CD4-positive, alpha-beta memory T cell (primary cell): ENCODE measurements at regions of chr17 and their contacts with region 1.

Region 1: DNA sequence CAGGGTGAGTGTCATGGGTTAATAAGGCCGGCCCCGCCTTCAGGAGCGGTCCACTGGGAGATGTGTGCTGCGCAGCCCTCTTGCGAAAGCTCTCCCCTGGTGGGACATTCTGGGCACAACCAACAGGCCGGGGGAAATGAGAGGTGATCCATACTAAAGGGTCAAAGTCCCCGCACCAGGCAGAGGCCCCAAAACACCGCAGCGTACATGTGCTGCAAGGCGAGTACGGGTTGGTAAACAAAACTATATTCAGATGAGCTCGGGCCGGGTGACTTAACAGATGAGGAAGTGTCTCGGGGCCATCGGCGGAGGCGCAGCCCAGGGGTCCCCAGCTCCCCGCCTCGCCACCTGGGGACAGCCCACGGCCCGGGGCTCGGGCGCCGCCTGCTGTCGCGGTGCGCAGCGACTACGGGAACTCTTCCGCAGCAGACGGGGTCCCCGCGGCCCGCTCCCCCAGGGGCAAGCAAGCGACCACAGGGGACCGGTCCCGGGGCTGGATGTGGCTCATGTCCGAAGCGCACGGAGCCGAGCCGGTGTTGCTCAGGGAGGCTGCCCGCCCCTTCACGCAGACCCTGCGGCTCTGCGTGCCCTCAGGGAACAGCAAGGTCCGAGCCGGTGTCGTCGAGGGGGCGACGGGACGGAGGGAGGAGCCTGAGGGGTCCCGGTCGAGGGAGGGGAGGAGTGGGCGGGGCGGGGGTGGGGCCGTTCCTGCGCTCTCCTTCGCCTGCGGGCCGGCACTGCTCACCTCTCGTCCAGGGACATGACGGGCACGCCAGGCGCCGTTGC is at the start of gene RAB37:
- DNase-seq: peak in 4 of 5 donors; percentile 37 to 64 (median 44)
- H3K4me3 ChIP-seq: peak within 1 kb of the TSS; percentile 79 to 100
- H3K4me3 Mint-ChIP-seq: peak within 1 kb of the TSS; percentile 91 to 96 (median 94)
- H3K27ac ChIP-seq: peak within 1 kb of the TSS; percentile 64
- H3K27ac Mint-ChIP-seq: peak within 1 kb of the TSS in 6 of 7 donors; percentile 85 to 93 (median 87)
- H3K4me1 ChIP-seq: peaks cover 53% of the 10 kb centered on the region
- H3K4me1 Mint-ChIP-seq: peaks cover 31 to 60% (median 40%) of the 10 kb centered on the region in 4 donors
- H3K27me3 ChIP-seq: no peaks in the 10 kb centered on the region
- H3K27me3 Mint-ChIP-seq: no peaks in the 10 kb centered on the region
- total RNA-seq, gene RAB37: 23.2 to 25.9 TPM

Region 2: GRCh38 chr17:74545843-74546230 is 190.9 kb before region 1 on chr17 and contains the start of gene CD300C:
- CTCF ChIA-PET with region 1: no interaction called
- POLR2A ChIA-PET with region 1: no interaction called
- intact Hi-C with region 1: no loop called
- DNase-seq: no peak
- H3K4me3 ChIP-seq: no peak within 1 kb of the TSS
- H3K4me3 Mint-ChIP-seq: no peak within 1 kb of the TSS
- H3K27ac ChIP-seq: no peak within 1 kb of the TSS
- H3K27ac Mint-ChIP-seq: peak within 1 kb of the TSS in 2 of 7 donors; percentile 51 to 64
- H3K4me1 ChIP-seq: no peaks in the 10 kb centered on the region
- H3K4me1 Mint-ChIP-seq: peaks cover 0 to 8% (median 4%) of the 10 kb centered on the region in 4 donors
- H3K27me3 ChIP-seq: no peaks in the 10 kb centered on the region
- H3K27me3 Mint-ChIP-seq: peaks cover 2 to 3% of the 10 kb centered on the region in 2 donors
- total RNA-seq, gene CD300C: not detected

Region 3: GRCh38 chr17:74671031-74671771 is 65.5 kb before region 1 on chr17:
- CTCF ChIA-PET with region 1: interaction called, 36 read pairs
- POLR2A ChIA-PET with region 1: interaction called, 8 read pairs
- intact Hi-C with region 1: loop called (anchors 5 kb)
- DNase-seq: peak; percentile 64 to 73 (median 68)
- H3K4me3 ChIP-seq: no peak overlapping the region
- H3K4me3 Mint-ChIP-seq: no peak overlapping the region
- H3K27ac ChIP-seq: no peak overlapping the region
- H3K27ac Mint-ChIP-seq: peak overlapping the region in 3 of 7 donors; percentile 41 to 73 (median 62)
- H3K4me1 ChIP-seq: no peaks in the 10 kb centered on the region
- H3K4me1 Mint-ChIP-seq: peaks cover 0 to 17% (median 2%) of the 10 kb centered on the region in 4 donors
- H3K27me3 ChIP-seq: peaks cover 7% of the 10 kb centered on the region
- H3K27me3 Mint-ChIP-seq: peaks cover 32 to 38% of the 10 kb centered on the region in 2 donors

Region 4: DNA sequence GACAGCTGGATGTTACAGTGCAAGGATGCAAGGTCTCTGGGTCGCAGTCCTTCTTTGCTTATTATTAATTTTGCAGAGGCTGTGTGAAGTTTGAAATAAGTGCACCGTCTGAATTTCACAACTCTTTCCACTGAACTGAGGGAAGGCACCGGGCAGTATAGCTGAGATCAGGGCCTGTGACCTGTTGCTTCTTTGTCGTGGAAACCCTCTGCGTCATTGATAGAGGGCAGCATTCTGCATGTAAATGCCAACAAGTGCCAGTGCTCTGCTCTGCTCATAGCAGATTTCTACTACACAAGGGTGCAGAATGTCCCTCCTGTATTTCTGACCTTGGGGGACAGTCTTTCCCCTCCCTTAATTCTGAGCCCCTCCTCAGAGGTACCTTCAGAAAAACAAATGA is 49.9 kb before region 1 on chr17:
- CTCF ChIA-PET with region 1: interaction called, 39 read pairs
- POLR2A ChIA-PET with region 1: interaction called, 4 read pairs
- intact Hi-C with region 1: no loop called
- DNase-seq: no peak
- H3K4me3 ChIP-seq: no peak overlapping the region
- H3K4me3 Mint-ChIP-seq: no peak overlapping the region
- H3K27ac ChIP-seq: no peak overlapping the region
- H3K27ac Mint-ChIP-seq: no peak overlapping the region
- H3K4me1 ChIP-seq: no peaks in the 10 kb centered on the region
- H3K4me1 Mint-ChIP-seq: peaks cover 0 to 3% (median 0%) of the 10 kb centered on the region in 4 donors
- H3K27me3 ChIP-seq: peaks cover 6% of the 10 kb centered on the region
- H3K27me3 Mint-ChIP-seq: peaks cover 2 to 11% of the 10 kb centered on the region in 2 donors

Region 5: DNA sequence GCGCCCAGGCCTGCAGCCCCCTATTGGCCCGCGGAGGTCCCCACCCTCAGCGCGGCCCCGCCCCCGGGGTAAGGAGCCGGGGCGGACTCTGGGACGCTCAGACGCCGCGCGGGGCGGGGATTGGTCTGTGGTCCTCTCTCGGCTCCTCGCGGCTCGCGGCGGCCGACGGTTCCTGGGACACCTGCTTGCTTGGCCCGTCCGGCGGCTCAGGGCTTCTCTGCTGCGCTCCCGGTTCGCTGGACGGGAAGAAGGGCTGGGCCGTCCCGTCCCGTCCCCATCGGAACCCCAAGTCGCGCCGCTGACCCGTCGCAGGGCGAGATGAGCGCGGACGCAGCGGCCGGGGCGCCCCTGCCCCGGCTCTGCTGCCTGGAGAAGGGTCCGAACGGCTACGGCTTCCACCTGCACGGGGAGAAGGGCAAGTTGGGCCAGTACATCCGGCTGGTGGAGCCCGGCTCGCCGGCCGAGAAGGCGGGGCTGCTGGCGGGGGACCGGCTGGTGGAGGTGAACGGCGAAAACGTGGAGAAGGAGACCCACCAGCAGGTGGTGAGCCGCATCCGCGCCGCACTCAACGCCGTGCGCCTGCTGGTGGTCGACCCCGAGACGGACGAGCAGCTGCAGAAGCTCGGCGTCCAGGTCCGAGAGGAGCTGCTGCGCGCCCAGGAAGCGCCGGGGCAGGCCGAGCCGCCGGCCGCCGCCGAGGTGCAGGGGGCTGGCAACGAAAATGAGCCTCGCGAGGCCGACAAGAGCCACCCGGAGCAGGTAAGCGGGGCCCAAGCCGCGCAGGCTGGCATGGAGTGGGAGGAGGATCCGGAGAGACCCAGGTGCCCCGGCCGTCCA is 12.0 kb after region 1 on chr17 and contains the start of gene NHERF1:
- CTCF ChIA-PET with region 1: interaction called, 74 read pairs
- POLR2A ChIA-PET with region 1: interaction called, 166 read pairs
- intact Hi-C with region 1: no loop called
- DNase-seq: peak; percentile 61 to 96 (median 94)
- H3K4me3 ChIP-seq: peak within 1 kb of the TSS; percentile 64 to 92
- H3K4me3 Mint-ChIP-seq: peak within 1 kb of the TSS; percentile 90 to 99 (median 98)
- H3K27ac ChIP-seq: peak within 1 kb of the TSS; percentile 80
- H3K27ac Mint-ChIP-seq: peak within 1 kb of the TSS; percentile 88 to 98 (median 94)
- H3K4me1 ChIP-seq: peaks cover 73% of the 10 kb centered on the region
- H3K4me1 Mint-ChIP-seq: peaks cover 43 to 81% (median 60%) of the 10 kb centered on the region in 4 donors
- H3K27me3 ChIP-seq: no peaks in the 10 kb centered on the region
- H3K27me3 Mint-ChIP-seq: no peaks in the 10 kb centered on the region
- total RNA-seq, gene NHERF1: 202 to 209 TPM

Region 6: DNA sequence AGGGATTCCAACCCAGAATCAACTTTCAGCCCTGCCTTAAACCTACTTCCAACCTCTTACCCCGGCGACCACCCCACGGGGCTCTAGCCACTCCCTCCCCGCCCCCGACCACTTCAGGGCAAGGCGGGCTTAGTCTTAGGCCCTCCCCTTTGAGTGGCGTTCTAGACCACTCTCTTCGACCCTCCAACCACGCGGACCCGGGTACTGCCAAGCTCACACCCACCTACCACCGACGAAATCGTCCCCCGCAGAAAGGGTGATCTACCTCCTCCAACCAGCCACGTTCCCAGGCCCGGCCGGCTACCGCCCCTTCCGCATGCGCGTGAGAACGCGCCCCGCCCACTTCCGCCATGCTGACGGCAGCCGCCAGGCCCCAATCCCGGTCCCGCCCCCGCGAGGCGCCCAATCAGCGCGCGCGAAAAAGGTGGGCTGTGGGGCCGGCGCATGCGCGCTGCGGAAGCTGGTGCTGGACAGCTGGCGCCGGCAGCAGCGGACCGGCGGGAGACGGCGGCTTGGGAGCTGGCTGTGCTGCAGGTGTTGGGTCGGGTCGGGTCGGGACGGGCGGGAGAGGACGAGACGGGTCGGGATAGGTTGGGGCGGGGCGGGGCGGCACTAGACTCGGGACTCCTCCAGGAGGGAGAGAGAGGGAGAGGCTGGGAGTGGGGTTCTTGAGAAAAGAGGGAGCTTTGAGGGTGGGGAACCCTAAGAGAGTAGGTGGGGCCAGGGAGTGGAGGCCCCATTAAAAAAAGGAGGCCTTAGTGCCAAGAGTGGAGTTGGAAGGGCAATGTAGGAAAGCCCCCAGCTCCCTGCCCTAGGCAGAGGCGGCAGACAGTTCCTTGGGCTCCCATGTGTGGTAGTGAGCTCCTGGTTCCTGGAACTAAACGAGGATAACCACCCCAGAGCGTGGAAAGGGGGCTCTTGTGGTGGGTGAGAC is 39.6 kb after region 1 on chr17 and contains the start of gene NAT9:
- CTCF ChIA-PET with region 1: interaction called, 136 read pairs
- POLR2A ChIA-PET with region 1: interaction called, 195 read pairs
- intact Hi-C with region 1: no loop called
- DNase-seq: peak; percentile 95 to 99 (median 97)
- H3K4me3 ChIP-seq: peak within 1 kb of the TSS; percentile 64 to 89
- H3K4me3 Mint-ChIP-seq: peak within 1 kb of the TSS; percentile 95 to 100 (median 99)
- H3K27ac ChIP-seq: peak within 1 kb of the TSS; percentile 77
- H3K27ac Mint-ChIP-seq: peak within 1 kb of the TSS; percentile 93 to 99 (median 97)
- H3K4me1 ChIP-seq: peaks cover 65% of the 10 kb centered on the region
- H3K4me1 Mint-ChIP-seq: peaks cover 45 to 83% (median 61%) of the 10 kb centered on the region in 4 donors
- H3K27me3 ChIP-seq: no peaks in the 10 kb centered on the region
- H3K27me3 Mint-ChIP-seq: no peaks in the 10 kb centered on the region
- total RNA-seq, gene NAT9: 60.0 to 70.3 TPM

Region 7: GRCh38 chr17:74790161-74791054 is 53.7 kb after region 1 on chr17:
- CTCF ChIA-PET with region 1: interaction called, 39 read pairs
- POLR2A ChIA-PET with region 1: interaction called, 12 read pairs
- intact Hi-C with region 1: no loop called
- DNase-seq: no peak
- H3K4me3 ChIP-seq: no peak overlapping the region
- H3K4me3 Mint-ChIP-seq: peak overlapping the region in 6 of 8 donors; percentile 51 to 70 (median 58)
- H3K27ac ChIP-seq: no peak overlapping the region
- H3K27ac Mint-ChIP-seq: peak overlapping the region in 4 of 7 donors; percentile 42 to 82 (median 68)
- H3K4me1 ChIP-seq: peaks cover 19% of the 10 kb centered on the region
- H3K4me1 Mint-ChIP-seq: peaks cover 17 to 41% (median 29%) of the 10 kb centered on the region in 4 donors
- H3K27me3 ChIP-seq: no peaks in the 10 kb centered on the region
- H3K27me3 Mint-ChIP-seq: no peaks in the 10 kb centered on the region

Region 8: DNA sequence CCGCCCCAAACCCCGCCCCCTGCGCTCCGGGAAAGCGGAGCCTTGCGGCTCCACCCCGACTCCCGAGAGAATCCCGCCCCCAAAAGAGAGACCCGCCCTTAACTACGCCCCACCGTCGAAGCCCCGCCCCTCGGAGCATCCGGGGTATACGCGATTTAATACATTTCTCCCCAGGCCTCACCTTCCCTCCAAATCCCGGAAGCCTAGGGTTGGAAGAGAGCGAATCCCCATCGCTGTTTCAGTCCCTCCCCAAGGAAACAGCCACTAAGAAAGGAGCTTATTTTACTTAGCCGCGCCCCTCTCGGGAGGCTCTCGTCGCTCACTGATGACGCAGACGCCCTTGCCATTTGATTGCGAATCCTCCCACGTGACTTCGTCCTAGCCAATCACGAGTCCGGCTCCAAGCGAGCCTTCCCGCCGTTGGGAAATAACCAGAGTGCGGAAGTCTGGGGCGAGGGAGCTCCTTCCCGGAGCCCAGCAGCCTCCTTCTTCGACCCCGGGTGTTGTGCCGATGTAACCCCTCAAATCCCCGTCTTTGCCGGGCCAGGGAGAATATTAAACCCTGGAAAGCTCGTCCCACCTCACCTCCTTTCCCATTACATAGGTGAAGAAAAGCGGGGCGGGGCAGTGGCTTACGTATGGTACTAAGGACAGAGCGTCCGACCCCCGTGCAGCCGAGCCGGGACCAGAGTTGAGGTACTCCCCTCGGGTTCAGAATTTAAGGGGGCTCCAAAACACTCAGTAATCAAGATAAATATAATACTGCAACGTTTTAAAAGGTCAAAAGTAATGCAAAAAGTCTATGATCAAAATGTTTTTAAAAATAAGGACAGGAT is 136.6 kb after region 1 on chr17:
- CTCF ChIA-PET with region 1: interaction called, 3 read pairs
- POLR2A ChIA-PET with region 1: interaction called, 20 read pairs
- intact Hi-C with region 1: no loop called
- DNase-seq: peak; percentile 97 to 100 (median 99)
- H3K4me3 ChIP-seq: peak overlapping the region; percentile 79 to 84
- H3K4me3 Mint-ChIP-seq: peak overlapping the region; percentile 87 to 98 (median 94)
- H3K27ac ChIP-seq: peak overlapping the region; percentile 90
- H3K27ac Mint-ChIP-seq: peak overlapping the region; percentile 90 to 98 (median 98)
- H3K4me1 ChIP-seq: peaks cover 22% of the 10 kb centered on the region
- H3K4me1 Mint-ChIP-seq: peaks cover 10 to 27% (median 17%) of the 10 kb centered on the region in 4 donors
- H3K27me3 ChIP-seq: no peaks in the 10 kb centered on the region
- H3K27me3 Mint-ChIP-seq: no peaks in the 10 kb centered on the region